ENCODE measurements at regions of chr1 and their contacts with region 1.

Region 1: DNA sequence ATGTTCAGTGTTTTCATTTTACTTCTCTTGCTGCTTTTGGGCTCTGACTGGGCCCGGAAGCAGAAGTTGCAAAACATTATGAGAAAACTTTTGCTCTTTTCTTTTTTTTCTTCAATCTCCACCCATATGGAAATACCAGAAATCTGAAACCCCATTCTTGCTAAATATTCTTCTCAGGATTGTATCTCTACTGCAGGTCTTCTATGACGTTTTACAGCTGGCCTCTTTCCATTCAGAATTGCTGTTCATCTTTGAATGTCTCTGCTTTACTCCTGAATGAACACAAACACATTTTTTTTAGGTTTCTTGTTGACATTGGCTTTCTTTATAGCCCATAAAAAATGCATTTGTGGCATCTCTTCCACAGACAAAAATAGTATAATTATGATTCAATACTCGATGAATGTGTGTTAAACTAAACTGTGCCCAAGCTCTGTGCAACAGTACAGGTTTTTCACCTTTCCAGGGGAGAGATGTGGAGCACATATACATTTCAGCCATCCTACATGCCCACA is 18.8 kb downstream of the PTPRC start:
- DNase-seq: peak in 6 of 9 donors; percentile 59 to 83 (median 70)
- ATAC-seq: peak; percentile 65
- H3K4me3 ChIP-seq: peak overlapping the region; percentile 40
- H3K4me3 Mint-ChIP-seq: peak overlapping the region; percentile 49 to 87 (median 82)
- H3K27ac ChIP-seq: peak overlapping the region; percentile 94
- H3K27ac Mint-ChIP-seq: peak overlapping the region; percentile 90 to 99 (median 97)
- H3K4me1 ChIP-seq: peaks cover 65 to 78% of the 10 kb centered on the region in 2 donors
- H3K4me1 Mint-ChIP-seq: peaks cover 36 to 90% (median 73%) of the 10 kb centered on the region in 7 donors
- H3K27me3 ChIP-seq: no peaks in the 10 kb centered on the region
- H3K27me3 Mint-ChIP-seq: no peaks in the 10 kb centered on the region

Region 2: DNA sequence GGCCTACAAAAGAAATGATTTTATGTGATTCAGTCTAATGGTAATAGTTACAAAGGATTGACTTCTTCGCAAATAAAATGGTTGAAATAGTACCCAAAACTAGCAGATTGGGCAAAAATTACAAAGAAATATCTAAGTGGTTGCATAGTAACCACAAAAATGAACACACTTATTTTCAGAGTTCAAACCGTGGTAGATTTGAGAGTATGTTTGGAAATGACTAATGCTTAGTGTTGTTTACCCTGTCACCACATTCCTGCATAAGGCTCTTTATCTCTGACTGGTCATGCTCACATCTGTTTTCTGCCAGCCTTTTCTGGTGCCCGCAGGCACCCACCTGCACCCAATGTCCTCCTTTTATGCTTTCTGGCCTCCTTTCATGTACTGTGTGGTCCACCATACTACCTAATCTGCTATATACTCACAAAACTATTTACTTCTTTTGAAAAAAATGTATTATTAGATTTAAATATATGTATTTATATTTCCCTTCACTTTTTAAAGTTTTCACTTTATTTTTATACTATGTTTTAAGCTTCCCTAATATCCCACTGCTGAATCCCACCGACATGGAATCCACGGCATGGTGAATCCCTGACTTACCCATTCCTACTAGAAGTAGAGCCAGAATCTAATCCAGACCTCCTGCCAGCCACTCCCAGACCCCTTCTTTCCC is 11.6 kb after region 1 on chr1:
- CTCF ChIA-PET with region 1: interaction called, 6 read pairs
- POLR2A ChIA-PET with region 1: interaction called, 83 read pairs
- intact Hi-C with region 1: loop called (anchors 1 kb)
- DNase-seq: peak in 2 of 9 donors; percentile 46 to 53
- ATAC-seq: peak; percentile 81
- H3K4me3 ChIP-seq: peak overlapping the region; percentile 2
- H3K4me3 Mint-ChIP-seq: peak overlapping the region; percentile 48 to 78 (median 71)
- H3K27ac ChIP-seq: peak overlapping the region; percentile 75
- H3K27ac Mint-ChIP-seq: peak overlapping the region; percentile 74 to 98 (median 91)
- H3K4me1 ChIP-seq: peaks cover 79 to 86% of the 10 kb centered on the region in 2 donors
- H3K4me1 Mint-ChIP-seq: peaks cover 61 to 100% (median 95%) of the 10 kb centered on the region in 7 donors
- H3K27me3 ChIP-seq: no peaks in the 10 kb centered on the region
- H3K27me3 Mint-ChIP-seq: no peaks in the 10 kb centered on the region